Activated naive CD4-positive, alpha-beta T cell treated with anti-CD3 and anti-CD28 coated beads for 36 hours (primary cell): ENCODE measurements at regions of chr5 and their contacts with region 1.

Region 1: GRCh38 chr5:96614110-96614691 is 48.0 kb upstream of the CAST start:
- DNase-seq: peak; percentile 65
- H3K4me3 Mint-ChIP-seq: no peak overlapping the region
- H3K27ac Mint-ChIP-seq: no peak overlapping the region
- H3K4me1 Mint-ChIP-seq: peaks cover 4% of the 10 kb centered on the region
- H3K27me3 Mint-ChIP-seq: peaks cover 5% of the 10 kb centered on the region

Region 2: GRCh38 chr5:96687812-96688453 is 73.7 kb after region 1 on chr5:
- CTCF ChIA-PET with region 1: interaction called, 42 read pairs
- intact Hi-C with region 1: loop called (anchors 1 kb)
- DNase-seq: no peak
- H3K4me3 Mint-ChIP-seq: no peak overlapping the region
- H3K27ac Mint-ChIP-seq: no peak overlapping the region
- H3K4me1 Mint-ChIP-seq: peaks cover 14% of the 10 kb centered on the region
- H3K27me3 Mint-ChIP-seq: no peaks in the 10 kb centered on the region

Region 3: DNA sequence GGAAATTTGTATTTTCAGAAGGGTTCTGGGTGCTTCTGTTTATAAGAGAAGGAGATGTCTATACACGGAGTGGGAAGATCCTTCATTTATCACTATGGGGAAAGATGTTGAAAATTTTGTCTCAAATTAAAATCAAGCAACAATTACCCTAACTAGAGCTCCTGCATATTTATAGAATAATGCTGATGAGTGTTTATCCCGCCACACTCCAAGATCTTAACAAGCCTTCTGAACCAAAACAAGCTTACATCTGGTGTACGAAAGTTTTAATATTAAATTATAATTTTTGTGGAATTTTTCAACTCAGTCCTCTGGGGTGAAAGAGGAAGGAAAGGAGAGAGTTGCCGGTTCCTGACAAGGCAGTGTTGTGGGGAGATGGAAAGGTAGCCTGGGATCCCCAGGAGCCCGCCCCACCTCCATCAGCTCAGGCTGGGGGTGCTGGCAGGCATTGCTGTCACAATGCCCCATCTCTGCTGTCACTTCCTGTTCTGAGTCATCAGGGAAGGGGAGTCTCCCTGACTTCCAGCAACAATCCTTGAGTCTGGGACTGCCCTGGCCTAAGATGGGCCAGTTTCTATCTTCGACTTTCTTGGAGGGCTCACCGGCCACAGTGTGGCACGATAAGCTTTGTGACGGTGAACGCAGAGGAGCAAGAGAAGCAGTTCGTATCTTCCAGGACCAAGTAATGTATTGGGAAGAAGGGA is 129.0 kb after region 1 on chr5:
- CTCF ChIA-PET with region 1: interaction called, 11 read pairs
- intact Hi-C with region 1: no loop called
- DNase-seq: no peak
- H3K4me3 Mint-ChIP-seq: no peak overlapping the region
- H3K27ac Mint-ChIP-seq: peak overlapping the region; percentile 44
- H3K4me1 Mint-ChIP-seq: peaks cover 42% of the 10 kb centered on the region
- H3K27me3 Mint-ChIP-seq: no peaks in the 10 kb centered on the region

Region 4: DNA sequence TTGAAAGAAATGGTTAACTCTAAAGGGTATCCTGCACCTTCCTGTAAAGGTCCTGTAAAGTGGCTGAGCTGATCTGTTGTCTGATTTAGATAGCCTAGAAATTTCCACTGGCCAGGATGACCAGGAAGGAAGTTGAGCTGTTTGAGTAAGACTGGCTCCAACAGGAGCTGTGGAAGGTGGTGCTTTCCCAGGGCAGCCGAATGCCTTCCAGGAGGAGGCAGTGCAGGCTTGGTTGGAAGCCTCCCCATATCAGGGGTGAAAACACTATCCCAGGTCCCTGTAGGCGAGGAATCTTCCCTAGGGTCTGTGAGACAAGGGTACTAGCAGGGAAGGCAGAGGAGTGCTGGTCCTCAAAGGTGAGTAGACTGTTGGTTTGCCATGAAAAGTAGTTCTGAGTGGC is 429.9 kb after region 1 on chr5:
- CTCF ChIA-PET with region 1: interaction called, 3 read pairs
- intact Hi-C with region 1: loop called (anchors 10 kb)
- DNase-seq: no peak
- H3K4me3 Mint-ChIP-seq: no peak overlapping the region
- H3K27ac Mint-ChIP-seq: no peak overlapping the region
- H3K4me1 Mint-ChIP-seq: no peaks in the 10 kb centered on the region
- H3K27me3 Mint-ChIP-seq: no peaks in the 10 kb centered on the region